ENCODE measurements at regions of chr3 and their contacts with region 1.

Region 1: DNA sequence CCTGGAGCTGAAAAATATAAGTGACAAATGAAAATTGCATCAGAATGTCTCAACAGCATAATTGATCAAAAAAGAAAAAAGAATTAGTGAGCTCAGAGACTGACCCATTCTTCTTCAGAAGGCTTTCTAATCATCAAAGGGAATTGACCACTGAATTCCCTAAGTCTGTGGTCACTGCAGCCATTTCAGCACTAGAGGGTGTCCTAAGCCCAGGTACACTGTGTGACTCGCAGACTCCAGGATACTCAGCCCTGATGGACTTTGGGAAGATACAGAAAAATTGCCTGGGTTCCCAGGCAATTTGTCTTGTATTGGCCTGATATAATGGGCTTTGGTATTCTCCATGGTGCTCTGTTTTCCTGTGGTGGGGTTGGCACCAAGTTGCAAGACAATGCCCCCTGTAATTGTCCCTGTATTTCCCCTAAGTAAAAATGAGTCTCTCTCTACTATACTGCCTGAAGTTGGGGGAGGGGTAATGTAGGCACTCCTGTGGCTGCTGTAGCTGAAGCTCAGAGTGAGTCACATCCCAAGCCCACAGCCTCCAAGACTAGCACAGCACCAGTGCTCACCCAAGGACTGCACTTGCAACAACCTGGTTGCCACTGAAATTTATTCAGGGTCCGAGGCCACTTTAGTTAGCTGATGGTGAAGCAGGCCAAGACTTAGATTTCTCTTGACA is 256.0 kb upstream of the STAC start:
- DNase-seq: peak; percentile 41 to 63
- H3K4me3 ChIP-seq: no peak overlapping the region
- H3K27ac ChIP-seq: no peak overlapping the region
- H3K4me1 ChIP-seq: no peaks in the 10 kb centered on the region; a peak in 1 of 7 replicates
- H3K27me3 ChIP-seq: no peaks in the 10 kb centered on the region
- CTCF ChIP-seq: peak; percentile 67 to 87 (median 83)
- EP300 ChIP-seq: no peak
- POLR2A ChIP-seq: no peak
- RAD21 ChIP-seq: peak; percentile 98 to 99

Region 2: GRCh38 chr3:35965908-35966307 is 158.3 kb before region 1 on chr3:
- CTCF ChIA-PET with region 1: interaction called, 17 read pairs
- POLR2A ChIA-PET with region 1: no interaction called
- DNase-seq: no peak
- H3K4me3 ChIP-seq: no peak overlapping the region
- H3K27ac ChIP-seq: no peak overlapping the region
- H3K4me1 ChIP-seq: no peaks in the 10 kb centered on the region
- H3K27me3 ChIP-seq: no peaks in the 10 kb centered on the region
- CTCF ChIP-seq: peak in 2 of 3 experiments; percentile 41 to 69; a peak in 2 of 4 replicates
- EP300 ChIP-seq: no peak
- POLR2A ChIP-seq: no peak
- RAD21 ChIP-seq: peak; percentile 84

Region 3: DNA sequence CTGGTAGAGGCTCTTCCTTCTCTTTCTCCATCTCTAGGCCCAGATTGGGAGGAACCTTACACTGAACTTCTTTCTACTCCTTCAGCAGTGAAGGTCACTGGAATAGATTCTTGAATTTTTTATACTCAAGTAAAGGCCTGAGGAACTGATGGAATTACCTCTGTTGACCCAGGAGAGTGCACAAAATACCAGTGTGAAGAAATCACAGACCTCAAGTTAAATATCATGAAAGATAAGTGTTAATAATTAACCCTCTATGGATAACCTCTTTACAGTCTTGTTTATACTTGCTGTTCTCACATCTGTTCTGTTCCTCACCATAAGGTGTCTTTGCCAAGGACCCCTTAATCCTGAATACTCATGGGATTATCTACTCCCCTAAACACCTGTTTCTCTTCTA is 11.6 kb after region 1 on chr3:
- CTCF ChIA-PET with region 1: interaction called, 13 read pairs
- POLR2A ChIA-PET with region 1: no interaction called
- DNase-seq: no peak
- H3K4me3 ChIP-seq: no peak overlapping the region
- H3K27ac ChIP-seq: no peak overlapping the region
- H3K4me1 ChIP-seq: no peaks in the 10 kb centered on the region
- H3K27me3 ChIP-seq: no peaks in the 10 kb centered on the region
- CTCF ChIP-seq: no peak
- EP300 ChIP-seq: no peak
- POLR2A ChIP-seq: no peak
- RAD21 ChIP-seq: no peak

Region 4: GRCh38 chr3:36540888-36541518 is 416.7 kb after region 1 on chr3:
- CTCF ChIA-PET with region 1: interaction called, 16 read pairs
- POLR2A ChIA-PET with region 1: no interaction called
- DNase-seq: peak in 1 of 2 experiments; percentile 52
- H3K4me3 ChIP-seq: no peak overlapping the region
- H3K27ac ChIP-seq: no peak overlapping the region
- H3K4me1 ChIP-seq: no peaks in the 10 kb centered on the region
- H3K27me3 ChIP-seq: no peaks in the 10 kb centered on the region
- CTCF ChIP-seq: peak in 2 of 3 experiments; percentile 70 to 79; a peak in 3 of 4 replicates
- EP300 ChIP-seq: no peak
- POLR2A ChIP-seq: no peak
- RAD21 ChIP-seq: peak; percentile 81 to 83

Region 5: GRCh38 chr3:36700537-36701248 is 576.4 kb after region 1 on chr3:
- CTCF ChIA-PET with region 1: interaction called, 20 read pairs
- POLR2A ChIA-PET with region 1: no interaction called
- DNase-seq: peak; percentile 31 to 73
- H3K4me3 ChIP-seq: no peak overlapping the region
- H3K27ac ChIP-seq: no peak overlapping the region
- H3K4me1 ChIP-seq: peaks cover 0 to 3% (median under 1%) of the 10 kb centered on the region in 4 experiments; a peak in 1 of 7 replicates
- H3K27me3 ChIP-seq: no peaks in the 10 kb centered on the region
- CTCF ChIP-seq: peak; percentile 78 to 90 (median 82)
- EP300 ChIP-seq: no peak
- POLR2A ChIP-seq: no peak
- RAD21 ChIP-seq: peak; percentile 97 to 98

Region 6: DNA sequence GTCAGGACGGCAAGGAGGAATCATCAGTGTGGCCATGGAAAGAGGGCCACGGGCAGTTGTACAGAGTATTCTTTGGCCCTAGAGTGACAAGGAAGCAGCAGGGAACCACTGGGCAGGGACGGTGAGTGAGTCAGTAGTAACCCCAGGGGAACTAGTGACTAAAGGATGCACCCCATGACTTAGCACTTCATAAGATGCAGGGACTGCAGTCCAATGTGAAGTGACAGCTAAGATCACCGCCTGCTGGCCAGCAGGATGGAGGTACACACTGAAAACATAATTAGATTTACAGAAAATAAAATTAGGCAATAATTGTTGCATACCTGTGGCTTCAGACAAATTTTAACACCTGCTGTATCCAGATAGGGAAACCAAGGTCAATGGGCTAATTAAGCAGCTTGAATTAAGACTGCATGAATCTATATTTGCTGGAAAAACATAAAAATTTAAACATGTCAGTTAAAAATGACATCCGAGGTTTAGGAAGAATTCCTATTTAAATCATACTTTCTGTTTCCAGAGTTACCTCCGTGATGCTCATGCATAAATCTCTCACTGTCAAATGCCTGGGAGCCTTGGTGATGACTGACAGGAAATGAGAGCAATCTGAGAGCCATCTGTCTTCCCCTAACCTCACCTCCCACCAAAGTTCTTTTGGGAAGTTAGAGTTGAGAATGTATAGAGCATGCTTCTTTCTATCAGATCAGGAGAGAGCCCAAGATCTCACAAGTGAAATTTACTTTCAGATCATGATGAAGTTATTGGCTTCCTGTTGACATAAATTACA is 583.6 kb after region 1 on chr3:
- CTCF ChIA-PET with region 1: interaction called, 20 read pairs
- POLR2A ChIA-PET with region 1: no interaction called
- DNase-seq: no peak
- H3K4me3 ChIP-seq: no peak overlapping the region
- H3K27ac ChIP-seq: no peak overlapping the region
- H3K4me1 ChIP-seq: no peaks in the 10 kb centered on the region
- H3K27me3 ChIP-seq: no peaks in the 10 kb centered on the region
- CTCF ChIP-seq: peak in 2 of 3 experiments; percentile 10 to 38; a peak in 2 of 4 replicates
- EP300 ChIP-seq: no peak
- POLR2A ChIP-seq: no peak
- RAD21 ChIP-seq: peak; percentile 40 to 53

Measured in H1 (cell line).